Astrocyte of the cerebellum (primary cell): ENCODE measurements at regions of chr20 and their contacts with region 1.

Region 1: DNA sequence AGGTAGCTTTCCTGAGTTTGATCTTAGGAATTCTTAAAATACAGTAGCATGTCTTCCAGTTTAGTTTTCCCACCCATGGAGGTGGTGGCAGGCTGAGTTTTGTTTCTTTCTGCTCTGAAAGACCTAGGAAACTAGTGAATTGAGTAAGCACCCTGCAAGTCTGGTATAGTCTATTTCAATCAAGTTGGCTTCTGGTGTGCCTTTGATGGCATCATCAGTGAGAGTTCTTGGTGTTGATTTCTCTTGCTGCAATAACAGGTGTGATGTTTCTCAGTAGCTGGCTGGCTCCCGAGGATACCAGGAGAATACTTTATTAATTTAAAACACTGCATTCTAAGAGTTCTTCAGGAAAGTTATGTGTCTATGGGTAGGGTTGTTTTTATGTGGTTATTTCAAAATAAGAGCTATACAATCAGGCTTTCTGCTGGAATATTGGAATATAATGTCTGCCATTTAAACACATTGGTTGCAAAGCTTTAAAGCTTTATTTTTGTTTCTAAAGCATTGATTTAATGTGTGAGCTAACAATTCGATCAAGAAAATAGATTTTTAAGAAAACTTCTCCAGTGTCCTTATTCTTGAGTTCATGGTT is 19.0 kb downstream of the VAPB start:
- DNase-seq: no peak
- H3K4me3 ChIP-seq: no peak overlapping the region
- CTCF ChIP-seq: no peak

Region 2: GRCh38 chr20:58447511-58448391 is 39.7 kb after region 1 on chr20:
- in situ Hi-C with region 1: loop called (anchors 5 kb)
- DNase-seq: peak; percentile 28
- H3K4me3 ChIP-seq: no peak overlapping the region
- CTCF ChIP-seq: peak; percentile 78